ENCODE measurements at regions of chr1 and their contacts with region 1.

Region 1: GRCh38 chr1:167599957-167600581 is 30.0 kb upstream of the RCSD1 start:
- DNase-seq: peak in 8 of 9 donors; percentile 35 to 76 (median 60)
- ATAC-seq: peak; percentile 80
- H3K4me3 ChIP-seq: no peak overlapping the region
- H3K4me3 Mint-ChIP-seq: peak overlapping the region; percentile 9 to 80 (median 62)
- H3K27ac ChIP-seq: no peak overlapping the region
- H3K27ac Mint-ChIP-seq: peak overlapping the region in 8 of 9 donors; percentile 8 to 79 (median 36)
- H3K4me1 ChIP-seq: peaks cover 28 to 36% of the 10 kb centered on the region in 2 donors
- H3K4me1 Mint-ChIP-seq: peaks cover 27 to 50% (median 46%) of the 10 kb centered on the region in 7 donors
- H3K27me3 ChIP-seq: no peaks in the 10 kb centered on the region
- H3K27me3 Mint-ChIP-seq: peaks cover 0 to 3% (median 0%) of the 10 kb centered on the region in 5 donors

Region 2: DNA sequence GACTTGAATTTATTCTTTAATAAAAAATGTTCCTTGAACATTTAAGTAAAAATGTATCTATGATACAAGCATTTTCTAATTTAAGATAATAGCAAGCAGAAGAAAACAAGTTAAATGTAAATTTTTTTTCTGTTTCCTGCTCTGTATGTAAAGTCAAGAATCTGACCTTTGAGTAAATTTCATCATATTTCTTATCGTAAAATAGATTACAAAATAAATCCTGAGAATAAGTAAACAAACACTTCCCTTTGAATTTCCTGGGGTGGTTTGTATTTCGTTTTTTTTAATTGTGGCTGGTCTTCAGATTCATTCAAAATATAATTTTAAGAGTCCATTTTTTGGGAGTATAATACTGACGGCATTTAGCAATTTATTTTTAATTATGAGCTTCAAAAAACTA is 301.7 kb before region 1 on chr1:
- CTCF ChIA-PET with region 1: no interaction called
- POLR2A ChIA-PET with region 1: interaction called, 11 read pairs
- intact Hi-C with region 1: no loop called
- DNase-seq: no peak
- ATAC-seq: no peak
- H3K4me3 ChIP-seq: no peak overlapping the region
- H3K4me3 Mint-ChIP-seq: no peak overlapping the region
- H3K27ac ChIP-seq: no peak overlapping the region
- H3K27ac Mint-ChIP-seq: no peak overlapping the region
- H3K4me1 ChIP-seq: no peaks in the 10 kb centered on the region
- H3K4me1 Mint-ChIP-seq: peaks cover 2 to 46% (median 22%) of the 10 kb centered on the region in 7 donors
- H3K27me3 ChIP-seq: no peaks in the 10 kb centered on the region
- H3K27me3 Mint-ChIP-seq: no peaks in the 10 kb centered on the region

Region 3: DNA sequence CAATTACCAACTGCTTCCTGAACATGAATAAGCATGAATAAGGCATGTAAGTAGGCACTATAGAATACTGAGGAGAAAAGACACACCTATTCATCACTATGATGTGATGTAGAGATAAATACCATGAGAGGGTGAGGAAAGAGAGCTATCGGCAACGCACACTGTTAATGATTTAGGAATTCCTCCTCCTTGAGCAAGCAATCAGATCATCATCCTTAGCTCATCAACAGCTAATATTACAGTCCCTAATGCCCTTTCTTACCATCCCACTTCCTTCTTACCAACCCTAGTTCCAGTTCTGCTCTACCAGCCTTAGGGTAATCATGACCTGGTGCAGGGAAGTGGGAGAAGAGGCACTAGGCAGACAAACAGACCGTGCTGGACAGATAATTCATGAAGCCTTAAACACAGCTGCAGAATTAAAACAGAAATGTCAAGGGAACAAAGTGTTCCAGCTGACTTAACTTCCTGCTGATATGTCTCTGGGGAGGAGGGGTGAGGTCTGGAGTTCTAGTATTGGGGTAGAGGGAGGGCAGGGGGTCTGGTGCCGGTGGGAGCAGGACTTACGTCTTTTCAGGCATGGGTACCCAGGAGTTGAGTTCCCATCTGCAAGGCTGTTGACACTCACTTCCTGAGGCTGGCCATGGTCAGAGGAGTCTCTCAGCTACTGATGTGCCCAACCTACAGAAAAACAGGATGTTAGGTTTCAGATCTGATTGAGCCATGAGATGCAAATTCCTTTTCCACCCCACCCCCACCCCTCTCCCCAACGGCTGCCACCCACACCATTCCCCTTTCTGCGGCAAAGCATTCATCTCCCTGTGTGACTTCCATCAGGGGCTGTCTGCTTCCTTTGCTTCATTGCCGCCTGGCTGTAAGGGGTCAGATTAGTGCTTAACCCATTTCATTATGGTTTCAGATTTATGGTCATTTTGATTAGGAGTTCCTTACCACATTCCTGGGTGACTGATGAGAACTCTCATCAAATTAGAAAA is 17.4 kb after region 1 on chr1:
- CTCF ChIA-PET with region 1: interaction called, 46 read pairs
- POLR2A ChIA-PET with region 1: interaction called, 51 read pairs
- intact Hi-C with region 1: loop called (anchors 1 kb)
- DNase-seq: peak in 3 of 9 donors; percentile 22 to 28 (median 22)
- ATAC-seq: peak; percentile 85
- H3K4me3 ChIP-seq: peak overlapping the region; percentile 14
- H3K4me3 Mint-ChIP-seq: peak overlapping the region; percentile 73 to 96 (median 78)
- H3K27ac ChIP-seq: peak overlapping the region; percentile 66
- H3K27ac Mint-ChIP-seq: peak overlapping the region; percentile 83 to 96 (median 90)
- H3K4me1 ChIP-seq: peaks cover 16 to 35% of the 10 kb centered on the region in 2 donors
- H3K4me1 Mint-ChIP-seq: peaks cover 47 to 83% (median 69%) of the 10 kb centered on the region in 7 donors
- H3K27me3 ChIP-seq: no peaks in the 10 kb centered on the region
- H3K27me3 Mint-ChIP-seq: no peaks in the 10 kb centered on the region

Region 4: DNA sequence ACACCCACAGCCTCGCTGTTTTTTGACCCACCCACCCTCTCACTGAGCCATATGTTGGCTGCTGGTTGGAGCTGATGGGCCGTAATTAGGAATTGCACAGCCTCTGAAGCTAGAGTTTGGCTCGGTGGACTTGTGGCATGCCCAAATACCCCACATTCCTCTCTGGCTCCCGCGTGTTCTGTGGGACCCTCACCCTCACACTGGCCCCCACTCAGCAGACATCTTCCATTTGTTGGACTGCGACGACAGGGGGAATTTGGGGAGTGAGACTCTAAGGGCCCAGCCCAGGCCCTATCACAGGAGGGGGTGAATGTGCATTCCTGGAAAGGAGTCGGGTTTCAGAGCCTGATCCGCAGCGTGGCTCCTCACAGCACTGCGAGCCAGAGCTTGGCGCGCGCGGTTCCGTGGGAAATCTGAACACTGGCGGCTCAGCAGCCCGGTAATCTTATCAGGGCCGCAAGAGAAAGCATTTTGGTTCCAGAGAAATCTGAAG is 35.1 kb after region 1 on chr1:
- CTCF ChIA-PET with region 1: interaction called, 283 read pairs
- POLR2A ChIA-PET with region 1: interaction called, 276 read pairs
- intact Hi-C with region 1: loop called (anchors 1 kb)
- DNase-seq: no peak
- ATAC-seq: no peak
- H3K4me3 ChIP-seq: no peak overlapping the region
- H3K4me3 Mint-ChIP-seq: peak overlapping the region in 7 of 10 donors; percentile 23 to 99 (median 85)
- H3K27ac ChIP-seq: peak overlapping the region; percentile 61
- H3K27ac Mint-ChIP-seq: peak overlapping the region in 8 of 9 donors; percentile 53 to 95 (median 86)
- H3K4me1 ChIP-seq: peaks cover 67 to 76% of the 10 kb centered on the region in 2 donors
- H3K4me1 Mint-ChIP-seq: peaks cover 71 to 90% (median 82%) of the 10 kb centered on the region in 7 donors
- H3K27me3 ChIP-seq: no peaks in the 10 kb centered on the region
- H3K27me3 Mint-ChIP-seq: no peaks in the 10 kb centered on the region

Region 5: DNA sequence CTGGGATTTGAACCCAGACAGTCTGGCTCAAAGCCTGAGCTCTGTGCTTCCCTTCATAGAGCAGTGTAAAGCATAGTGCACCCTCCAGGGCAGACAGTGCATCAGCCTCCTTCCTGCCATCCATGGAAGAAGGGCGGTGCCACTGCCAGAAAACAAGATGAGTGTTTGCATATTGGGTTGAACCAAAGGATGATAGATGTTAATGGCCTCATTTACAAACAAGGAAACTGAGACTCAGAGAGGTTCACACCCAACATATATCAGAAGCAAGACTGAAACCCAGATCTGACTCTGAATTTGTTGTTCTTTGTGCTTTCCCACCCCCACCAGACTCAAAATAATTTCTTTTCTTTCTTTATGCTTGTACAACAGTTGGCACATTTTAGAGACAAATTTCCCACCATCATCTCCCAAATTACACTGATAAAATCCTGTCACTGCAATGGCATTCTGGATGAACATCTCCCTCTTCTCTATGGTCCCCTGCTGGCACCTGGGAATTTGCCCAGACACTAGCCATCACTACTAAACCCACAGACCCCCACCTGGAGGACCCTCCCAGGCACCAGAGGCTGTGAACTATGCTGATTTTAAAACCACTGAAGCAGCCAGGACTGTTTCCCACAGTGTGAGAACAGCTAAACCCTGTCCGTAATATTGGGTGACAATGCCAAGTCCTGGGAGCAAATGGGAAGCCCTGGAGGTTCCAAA is 76.3 kb after region 1 on chr1:
- CTCF ChIA-PET with region 1: interaction called, 14 read pairs
- POLR2A ChIA-PET with region 1: interaction called, 5 read pairs
- intact Hi-C with region 1: no loop called
- DNase-seq: no peak
- ATAC-seq: peak; percentile 44
- H3K4me3 ChIP-seq: no peak overlapping the region
- H3K4me3 Mint-ChIP-seq: peak overlapping the region in 2 of 10 donors; percentile 14 to 21
- H3K27ac ChIP-seq: peak overlapping the region; percentile 7
- H3K27ac Mint-ChIP-seq: peak overlapping the region in 5 of 9 donors; percentile 32 to 89 (median 75)
- H3K4me1 ChIP-seq: peaks cover 9 to 19% of the 10 kb centered on the region in 2 donors
- H3K4me1 Mint-ChIP-seq: peaks cover 32 to 62% (median 38%) of the 10 kb centered on the region in 7 donors
- H3K27me3 ChIP-seq: no peaks in the 10 kb centered on the region
- H3K27me3 Mint-ChIP-seq: no peaks in the 10 kb centered on the region

Region 6: DNA sequence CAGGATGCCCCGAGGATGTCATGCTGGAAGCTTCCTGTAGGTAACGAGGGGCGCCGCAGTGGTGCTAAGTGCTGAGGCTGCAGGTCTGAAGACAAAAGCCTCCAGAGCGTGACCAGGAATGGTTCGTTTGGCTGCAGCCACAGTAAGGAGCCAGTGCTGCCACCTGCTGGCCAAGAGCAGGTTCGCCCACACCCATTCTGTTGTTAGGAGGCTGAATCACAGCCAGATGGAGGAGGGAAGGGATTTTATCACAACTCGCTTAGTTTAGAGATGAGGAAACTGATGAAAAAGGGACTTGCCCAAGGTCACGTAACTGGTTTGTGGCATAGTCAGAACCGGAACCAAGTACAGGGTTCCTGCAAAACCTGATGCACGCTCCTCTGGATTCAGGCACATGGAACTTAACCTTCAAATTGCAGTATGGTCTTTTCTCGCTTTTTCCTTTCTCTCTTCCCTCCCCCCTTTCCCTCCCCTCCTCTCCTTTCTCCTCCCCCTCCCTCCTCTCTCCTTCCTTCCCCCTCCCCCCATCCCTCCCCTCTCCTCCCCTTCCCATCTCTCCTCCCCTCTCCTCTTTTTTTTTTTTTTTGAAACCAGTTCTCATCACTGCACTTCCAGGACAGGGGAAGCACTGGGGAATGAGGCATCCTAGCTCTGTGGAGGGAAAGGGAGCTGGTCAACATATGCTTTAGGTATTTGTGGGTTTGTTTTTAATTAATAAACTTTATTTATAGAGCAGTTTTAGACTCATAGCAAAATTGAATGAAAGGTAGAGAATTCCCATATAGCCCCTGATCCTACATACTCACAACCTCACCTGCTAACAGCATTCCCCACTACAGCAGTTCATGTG is 203.5 kb after region 1 on chr1:
- CTCF ChIA-PET with region 1: no interaction called
- POLR2A ChIA-PET with region 1: no interaction called
- intact Hi-C with region 1: loop called (anchors 1 kb)
- DNase-seq: peak; percentile 41 to 83 (median 67)
- ATAC-seq: peak; percentile 95
- H3K4me3 ChIP-seq: no peak overlapping the region
- H3K4me3 Mint-ChIP-seq: peak overlapping the region in 9 of 10 donors; percentile 5 to 74 (median 60)
- H3K27ac ChIP-seq: no peak overlapping the region
- H3K27ac Mint-ChIP-seq: peak overlapping the region in 6 of 9 donors; percentile 38 to 93 (median 83)
- H3K4me1 ChIP-seq: peaks cover 20 to 21% of the 10 kb centered on the region in 2 donors
- H3K4me1 Mint-ChIP-seq: peaks cover 16 to 29% (median 26%) of the 10 kb centered on the region in 7 donors
- H3K27me3 ChIP-seq: no peaks in the 10 kb centered on the region
- H3K27me3 Mint-ChIP-seq: peaks cover 0 to 7% (median 0%) of the 10 kb centered on the region in 5 donors

Region 7: GRCh38 chr1:168178638-168179437 is 578.8 kb after region 1 on chr1 and contains the start of gene TIPRL:
- CTCF ChIA-PET with region 1: no interaction called
- POLR2A ChIA-PET with region 1: no interaction called
- intact Hi-C with region 1: no loop called
- DNase-seq: peak; percentile 88 to 94 (median 93)
- ATAC-seq: peak; percentile 95
- H3K4me3 ChIP-seq: peak within 1 kb of the TSS; percentile 80
- H3K4me3 Mint-ChIP-seq: no peak within 1 kb of the TSS
- H3K27ac ChIP-seq: peak within 1 kb of the TSS; percentile 96
- H3K27ac Mint-ChIP-seq: no peak within 1 kb of the TSS
- H3K4me1 ChIP-seq: peaks cover 14 to 16% of the 10 kb centered on the region in 2 donors
- H3K4me1 Mint-ChIP-seq: peaks cover 3 to 20% (median 9%) of the 10 kb centered on the region in 7 donors
- H3K27me3 ChIP-seq: no peaks in the 10 kb centered on the region
- H3K27me3 Mint-ChIP-seq: peaks cover 2 to 9% (median 2%) of the 10 kb centered on the region in 5 donors
- total RNA-seq, gene TIPRL: 17.2 to 41.2 (median 23.5) TPM